Naive thymus-derived CD4-positive, alpha-beta T cell (primary cell): ENCODE measurements at regions of chr2 and their contacts with region 1.

Region 1: DNA sequence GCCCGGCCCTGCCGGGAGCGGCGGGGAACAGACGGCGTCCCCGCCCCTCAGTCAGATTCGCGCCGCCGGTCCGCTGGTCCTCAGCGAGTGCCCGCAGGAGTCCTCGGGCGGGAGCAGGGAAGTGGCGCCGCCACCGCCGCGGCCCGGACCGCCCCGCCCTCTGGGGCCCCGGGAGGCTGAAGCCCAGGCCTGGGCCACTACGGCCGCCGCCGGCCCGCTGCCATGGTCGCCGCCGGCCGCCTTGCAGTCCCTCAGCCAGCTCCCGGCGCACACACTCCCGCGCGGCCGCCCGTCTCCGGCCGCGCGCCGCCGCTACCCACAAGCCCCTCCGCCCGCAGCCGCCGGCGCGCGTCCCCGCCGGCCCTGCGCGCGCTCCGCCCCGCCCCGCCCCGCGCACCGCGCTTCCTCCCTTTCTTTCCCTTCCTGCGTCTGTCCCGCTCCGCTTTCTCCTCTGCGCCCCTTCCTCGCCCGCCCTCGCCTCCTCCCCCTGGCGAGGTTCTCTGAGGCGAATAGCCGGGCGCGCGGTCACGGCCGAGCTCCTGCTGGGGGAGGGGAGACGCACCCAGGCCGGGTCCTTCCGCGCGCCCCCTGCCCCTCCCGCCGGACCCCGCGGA is at the start of gene ROCK2:
- DNase-seq: peak; percentile 45 to 81 (median 58)
- ATAC-seq: peak; percentile 82
- H3K4me3 ChIP-seq: peak within 1 kb of the TSS; percentile 87
- H3K4me3 Mint-ChIP-seq: peak within 1 kb of the TSS; percentile 93 to 100 (median 98)
- H3K27ac ChIP-seq: peak within 1 kb of the TSS; percentile 76
- H3K27ac Mint-ChIP-seq: peak within 1 kb of the TSS; percentile 87 to 96 (median 91)
- H3K4me1 ChIP-seq: peaks cover 13% of the 10 kb centered on the region in 2 donors
- H3K4me1 Mint-ChIP-seq: peaks cover 18 to 43% (median 33%) of the 10 kb centered on the region in 7 donors
- H3K27me3 ChIP-seq: no peaks in the 10 kb centered on the region
- H3K27me3 Mint-ChIP-seq: peaks cover 0 to 25% (median 0%) of the 10 kb centered on the region in 5 donors
- total RNA-seq, gene ROCK2: 12.0 to 23.9 (median 18.8) TPM

Region 2: DNA sequence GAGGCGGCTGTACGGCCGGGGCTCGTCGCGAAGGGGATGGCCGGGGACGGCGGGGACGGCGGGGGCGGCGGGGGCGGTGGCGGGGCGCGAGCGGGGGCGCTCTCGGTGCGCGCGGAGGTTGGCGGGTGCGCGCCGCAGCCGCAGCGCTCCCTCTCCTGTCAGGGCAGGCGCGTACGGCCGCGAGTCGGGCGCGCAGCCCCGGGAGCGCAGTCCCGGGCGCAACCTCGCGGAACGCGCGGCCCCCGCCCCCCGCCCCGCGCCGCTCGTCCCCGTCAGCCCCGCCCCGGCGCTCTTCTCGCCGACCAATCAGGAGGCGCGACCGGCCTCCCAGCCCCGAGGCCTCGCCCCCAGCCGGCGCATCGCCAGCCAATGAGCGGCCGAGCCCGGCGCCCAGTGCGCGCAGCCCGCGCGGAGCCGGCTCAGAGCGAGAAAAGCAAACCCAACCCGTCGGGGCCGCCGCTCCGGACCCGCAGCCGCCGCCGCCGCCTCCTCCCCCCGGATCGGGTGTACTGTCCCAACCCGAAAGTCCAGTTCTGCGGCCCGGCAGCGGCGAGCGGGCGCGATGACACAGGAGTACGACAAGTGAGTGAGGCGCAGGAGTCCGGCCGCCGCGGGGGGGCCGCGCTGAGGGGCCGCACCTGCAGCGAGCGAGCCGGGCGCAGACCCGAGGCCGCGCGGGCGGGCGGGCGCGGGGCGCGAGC is 1393.0 kb before region 1 on chr2 and contains the start of gene GRHL1:
- CTCF ChIA-PET with region 1: no interaction called
- POLR2A ChIA-PET with region 1: no interaction called
- intact Hi-C with region 1: loop called in 1 of 2 experiments (anchors 10 kb)
- DNase-seq: peak; percentile 82 to 95 (median 90)
- ATAC-seq: peak; percentile 97
- H3K4me3 ChIP-seq: peak within 1 kb of the TSS; percentile 57
- H3K4me3 Mint-ChIP-seq: peak within 1 kb of the TSS; percentile 70 to 90 (median 86)
- H3K27ac ChIP-seq: peak within 1 kb of the TSS; percentile 63
- H3K27ac Mint-ChIP-seq: peak within 1 kb of the TSS in 7 of 9 donors; percentile 15 to 77 (median 56)
- H3K4me1 ChIP-seq: no peaks in the 10 kb centered on the region
- H3K4me1 Mint-ChIP-seq: peaks cover 0 to 13% (median 8%) of the 10 kb centered on the region in 7 donors
- H3K27me3 ChIP-seq: no peaks in the 10 kb centered on the region
- H3K27me3 Mint-ChIP-seq: peaks cover 19 to 77% (median 39%) of the 10 kb centered on the region in 5 donors
- total RNA-seq, gene GRHL1: 0.19 to 1.3 (median 0.56) TPM

Region 3: DNA sequence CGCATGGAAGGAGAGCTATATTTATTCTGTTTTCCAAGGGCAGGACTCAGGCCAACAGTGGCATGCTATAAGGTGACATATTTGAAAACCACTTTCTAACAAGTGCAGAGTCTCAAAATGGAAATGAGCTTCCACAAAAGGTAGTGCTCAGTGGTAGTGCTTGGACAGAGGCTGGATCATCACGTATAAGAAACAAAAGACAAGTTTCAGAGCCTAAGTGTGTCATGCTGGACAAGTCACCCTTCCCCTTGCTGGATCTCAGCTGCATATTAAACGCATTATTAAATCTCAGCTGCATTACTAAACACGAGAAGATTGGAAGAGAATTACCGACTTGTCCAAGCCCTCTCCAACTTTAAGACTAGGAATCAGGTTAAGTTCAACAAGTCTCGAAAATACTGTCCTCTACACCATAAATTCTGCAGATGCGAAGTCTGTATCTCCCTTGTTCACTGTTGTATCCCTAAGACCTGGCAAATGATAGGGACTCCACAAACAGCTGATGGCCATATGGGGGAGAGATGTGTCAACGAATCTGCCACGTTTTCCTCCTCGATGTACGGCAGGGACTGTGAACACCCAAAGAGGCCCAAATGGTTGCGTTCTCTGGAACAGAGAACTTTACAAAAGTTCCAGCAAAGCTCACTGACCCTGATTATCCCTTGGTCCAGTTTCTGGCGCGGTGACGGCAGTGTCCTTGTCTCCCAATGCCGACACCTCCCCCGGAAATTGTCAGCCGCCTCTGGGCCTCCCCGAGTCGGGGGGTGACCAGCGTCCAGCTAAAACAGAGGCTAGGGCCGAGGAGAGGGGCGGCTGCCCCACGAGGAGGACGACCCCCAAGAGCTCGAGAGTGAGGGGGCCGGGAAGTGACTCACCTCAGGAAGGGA is 655.3 kb before region 1 on chr2:
- CTCF ChIA-PET with region 1: no interaction called
- POLR2A ChIA-PET with region 1: no interaction called
- intact Hi-C with region 1: loop called in 1 of 2 experiments (anchors 10 kb)
- DNase-seq: peak in 2 of 9 donors; percentile 6 to 8
- ATAC-seq: peak; percentile 15
- H3K4me3 ChIP-seq: peak overlapping the region; percentile 92
- H3K4me3 Mint-ChIP-seq: no peak overlapping the region
- H3K27ac ChIP-seq: peak overlapping the region; percentile 84
- H3K27ac Mint-ChIP-seq: no peak overlapping the region
- H3K4me1 ChIP-seq: peaks cover 13 to 16% of the 10 kb centered on the region in 2 donors
- H3K4me1 Mint-ChIP-seq: peaks cover 3 to 14% (median 6%) of the 10 kb centered on the region in 7 donors
- H3K27me3 ChIP-seq: no peaks in the 10 kb centered on the region
- H3K27me3 Mint-ChIP-seq: peaks cover 0 to 2% (median 0%) of the 10 kb centered on the region in 5 donors

Region 4: GRCh38 chr2:11234309-11234708 is 110.1 kb before region 1 on chr2:
- CTCF ChIA-PET with region 1: no interaction called
- POLR2A ChIA-PET with region 1: no interaction called
- intact Hi-C with region 1: loop called in 1 of 2 experiments (anchors 5 kb)
- DNase-seq: peak in 1 of 9 donors; percentile 8
- ATAC-seq: no peak
- H3K4me3 ChIP-seq: no peak overlapping the region
- H3K4me3 Mint-ChIP-seq: no peak overlapping the region
- H3K27ac ChIP-seq: no peak overlapping the region
- H3K27ac Mint-ChIP-seq: no peak overlapping the region
- H3K4me1 ChIP-seq: no peaks in the 10 kb centered on the region
- H3K4me1 Mint-ChIP-seq: peaks cover 0 to 11% (median 5%) of the 10 kb centered on the region in 7 donors
- H3K27me3 ChIP-seq: no peaks in the 10 kb centered on the region
- H3K27me3 Mint-ChIP-seq: no peaks in the 10 kb centered on the region

Region 5: GRCh38 chr2:11286749-11287148 is 57.7 kb before region 1 on chr2:
- CTCF ChIA-PET with region 1: no interaction called
- POLR2A ChIA-PET with region 1: no interaction called
- intact Hi-C with region 1: no loop called
- DNase-seq: no peak
- ATAC-seq: no peak
- H3K4me3 ChIP-seq: no peak overlapping the region
- H3K4me3 Mint-ChIP-seq: no peak overlapping the region
- H3K27ac ChIP-seq: no peak overlapping the region
- H3K27ac Mint-ChIP-seq: peak overlapping the region in 1 of 9 donors; percentile 17
- H3K4me1 ChIP-seq: no peaks in the 10 kb centered on the region
- H3K4me1 Mint-ChIP-seq: peaks cover 0 to 32% (median 27%) of the 10 kb centered on the region in 7 donors
- H3K27me3 ChIP-seq: no peaks in the 10 kb centered on the region
- H3K27me3 Mint-ChIP-seq: no peaks in the 10 kb centered on the region

Region 6: DNA sequence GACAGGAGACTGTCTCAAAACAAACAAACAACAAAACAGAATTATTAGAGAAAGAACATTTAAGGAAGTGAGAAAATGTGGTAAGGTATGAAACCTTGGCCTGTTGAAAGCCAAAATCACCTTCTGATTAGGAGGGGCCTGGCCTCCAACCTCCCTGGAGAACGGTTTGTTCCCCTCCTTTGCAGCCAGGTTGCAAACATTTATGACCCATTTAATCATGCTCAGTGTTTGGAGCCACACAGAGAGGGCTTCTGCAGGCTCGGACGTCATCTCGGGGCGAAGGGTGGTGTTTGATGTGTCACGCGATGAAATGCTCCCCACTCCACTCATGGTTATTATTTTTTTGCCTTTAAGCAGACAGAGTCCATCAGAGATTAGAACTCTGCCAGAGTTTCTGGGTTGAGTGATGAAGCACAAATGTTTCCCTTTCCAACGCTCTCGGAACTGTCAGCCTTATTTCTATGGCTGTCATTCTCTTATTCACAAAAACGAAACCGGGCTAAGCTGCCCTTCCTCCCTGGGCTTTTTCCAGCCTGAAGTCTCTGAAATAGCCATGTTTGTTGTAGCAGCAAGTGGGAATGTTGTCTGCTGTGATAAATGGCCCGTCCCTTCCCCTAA is 33.6 kb after region 1 on chr2:
- CTCF ChIA-PET with region 1: no interaction called
- POLR2A ChIA-PET with region 1: no interaction called
- intact Hi-C with region 1: no loop called
- DNase-seq: no peak
- ATAC-seq: no peak
- H3K4me3 ChIP-seq: no peak overlapping the region
- H3K4me3 Mint-ChIP-seq: no peak overlapping the region
- H3K27ac ChIP-seq: no peak overlapping the region
- H3K27ac Mint-ChIP-seq: no peak overlapping the region
- H3K4me1 ChIP-seq: no peaks in the 10 kb centered on the region
- H3K4me1 Mint-ChIP-seq: peaks cover 0 to 8% (median 2%) of the 10 kb centered on the region in 7 donors
- H3K27me3 ChIP-seq: no peaks in the 10 kb centered on the region
- H3K27me3 Mint-ChIP-seq: peaks cover 0 to 4% (median 0%) of the 10 kb centered on the region in 5 donors

Region 7: GRCh38 chr2:11389551-11390528 is 45.4 kb after region 1 on chr2:
- CTCF ChIA-PET with region 1: no interaction called
- POLR2A ChIA-PET with region 1: no interaction called
- intact Hi-C with region 1: no loop called
- DNase-seq: no peak
- ATAC-seq: no peak
- H3K4me3 ChIP-seq: no peak overlapping the region
- H3K4me3 Mint-ChIP-seq: no peak overlapping the region
- H3K27ac ChIP-seq: no peak overlapping the region
- H3K27ac Mint-ChIP-seq: no peak overlapping the region
- H3K4me1 ChIP-seq: no peaks in the 10 kb centered on the region
- H3K4me1 Mint-ChIP-seq: peaks cover 0 to 2% (median 0%) of the 10 kb centered on the region in 7 donors
- H3K27me3 ChIP-seq: no peaks in the 10 kb centered on the region
- H3K27me3 Mint-ChIP-seq: peaks cover 0 to 4% (median 0%) of the 10 kb centered on the region in 5 donors

Region 8: DNA sequence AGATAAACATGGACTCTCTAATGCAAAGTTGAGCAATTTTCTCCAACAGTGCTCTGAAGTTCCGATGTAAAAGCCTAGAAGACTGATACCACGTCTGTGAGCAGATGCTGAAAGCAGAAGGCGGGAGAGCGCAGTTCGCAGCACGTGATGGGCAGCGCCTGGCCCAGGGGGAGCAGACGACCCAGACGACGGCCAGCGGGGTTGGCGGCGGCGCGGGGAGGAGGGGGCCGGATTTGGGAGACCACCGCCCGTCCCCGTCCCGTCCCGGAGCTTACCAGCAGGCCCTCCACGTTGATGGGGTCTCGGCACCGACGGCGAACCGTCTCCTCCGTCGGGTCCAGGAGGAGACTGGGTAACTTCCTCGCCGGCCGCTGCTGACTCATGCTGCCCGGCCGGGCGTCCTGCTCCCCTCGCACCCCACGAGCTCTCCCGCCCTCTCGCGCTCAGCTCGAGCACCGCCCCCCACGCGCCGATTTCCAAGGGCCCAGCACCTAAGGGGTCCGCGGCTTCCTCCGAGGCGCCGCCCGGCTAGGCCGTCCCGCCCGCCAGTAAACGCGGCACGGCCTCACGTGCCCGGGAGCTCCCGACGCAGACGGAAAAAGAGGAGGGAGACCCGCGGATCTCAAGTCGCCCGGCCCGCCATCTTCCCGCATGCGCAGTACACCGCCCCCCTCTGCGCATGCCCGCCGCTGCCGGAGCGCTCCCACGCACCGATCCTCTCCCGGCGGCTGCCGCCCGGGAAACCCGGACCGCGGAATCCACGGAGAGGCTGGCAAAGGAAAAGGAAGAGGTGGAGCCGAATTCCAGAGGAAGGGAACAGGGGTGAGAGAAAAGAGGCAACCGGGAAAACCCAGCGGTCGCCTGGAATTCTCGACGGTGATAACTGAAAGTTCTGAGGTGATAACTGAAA is 121.3 kb after region 1 on chr2 and contains the start of gene E2F6:
- CTCF ChIA-PET with region 1: no interaction called
- POLR2A ChIA-PET with region 1: no interaction called
- intact Hi-C with region 1: loop called (anchors 2 kb)
- DNase-seq: peak; percentile 80 to 94 (median 87)
- ATAC-seq: peak; percentile 83
- H3K4me3 ChIP-seq: peak within 1 kb of the TSS; percentile 69
- H3K4me3 Mint-ChIP-seq: peak within 1 kb of the TSS; percentile 91 to 99 (median 98)
- H3K27ac ChIP-seq: peak within 1 kb of the TSS; percentile 73
- H3K27ac Mint-ChIP-seq: peak within 1 kb of the TSS; percentile 87 to 97 (median 93)
- H3K4me1 ChIP-seq: peaks cover 5 to 8% of the 10 kb centered on the region in 2 donors
- H3K4me1 Mint-ChIP-seq: peaks cover 27 to 49% (median 39%) of the 10 kb centered on the region in 7 donors
- H3K27me3 ChIP-seq: no peaks in the 10 kb centered on the region
- H3K27me3 Mint-ChIP-seq: peaks cover 0 to 2% (median 0%) of the 10 kb centered on the region in 5 donors
- total RNA-seq, gene E2F6: 6.2 to 11.6 (median 9.2) TPM

Region 9: GRCh38 chr2:11743846-11744553 is 399.6 kb after region 1 on chr2:
- CTCF ChIA-PET with region 1: no interaction called
- POLR2A ChIA-PET with region 1: no interaction called
- intact Hi-C with region 1: loop called (anchors 2 to 10 kb)
- DNase-seq: peak in 1 of 9 donors; percentile 80
- ATAC-seq: peak; percentile 64
- H3K4me3 ChIP-seq: peak overlapping the region; percentile 35
- H3K4me3 Mint-ChIP-seq: peak overlapping the region in 7 of 10 donors; percentile 38 to 81 (median 65)
- H3K27ac ChIP-seq: no peak overlapping the region
- H3K27ac Mint-ChIP-seq: peak overlapping the region in 4 of 9 donors; percentile 22 to 97 (median 62)
- H3K4me1 ChIP-seq: peaks cover 33 to 41% of the 10 kb centered on the region in 2 donors
- H3K4me1 Mint-ChIP-seq: peaks cover 18 to 50% (median 45%) of the 10 kb centered on the region in 7 donors
- H3K27me3 ChIP-seq: no peaks in the 10 kb centered on the region
- H3K27me3 Mint-ChIP-seq: no peaks in the 10 kb centered on the region